PC-3 (cell line): ENCODE measurements at regions of chr6 and their contacts with region 1.

Region 1: GRCh38 chr6:37169496-37170272 is at the start of gene PIM1:
- DNase-seq: peak; percentile 95
- ATAC-seq: peak; percentile 69
- H3K4me3 ChIP-seq: peak within 1 kb of the TSS; percentile 80
- H3K27ac ChIP-seq: peak within 1 kb of the TSS; percentile 78
- H3K4me1 ChIP-seq: peaks cover 13% of the 10 kb centered on the region
- H3K27me3 ChIP-seq: no peaks in the 10 kb centered on the region
- CTCF ChIP-seq: no peak
- total RNA-seq, gene PIM1: 74.1 and 93.3 TPM in 2 replicates

Region 2: GRCh38 chr6:36289281-36289878 is 880.3 kb before region 1 on chr6:
- CTCF ChIA-PET with region 1: no interaction called
- POLR2A ChIA-PET with region 1: interaction called, 23 read pairs
- intact Hi-C with region 1: no loop called
- DNase-seq: no peak
- ATAC-seq: no peak
- H3K4me3 ChIP-seq: no peak overlapping the region
- H3K27ac ChIP-seq: no peak overlapping the region
- H3K4me1 ChIP-seq: no peaks in the 10 kb centered on the region; the same call in 1 of the 2 replicates
- H3K27me3 ChIP-seq: no peaks in the 10 kb centered on the region
- CTCF ChIP-seq: no peak

Region 3: DNA sequence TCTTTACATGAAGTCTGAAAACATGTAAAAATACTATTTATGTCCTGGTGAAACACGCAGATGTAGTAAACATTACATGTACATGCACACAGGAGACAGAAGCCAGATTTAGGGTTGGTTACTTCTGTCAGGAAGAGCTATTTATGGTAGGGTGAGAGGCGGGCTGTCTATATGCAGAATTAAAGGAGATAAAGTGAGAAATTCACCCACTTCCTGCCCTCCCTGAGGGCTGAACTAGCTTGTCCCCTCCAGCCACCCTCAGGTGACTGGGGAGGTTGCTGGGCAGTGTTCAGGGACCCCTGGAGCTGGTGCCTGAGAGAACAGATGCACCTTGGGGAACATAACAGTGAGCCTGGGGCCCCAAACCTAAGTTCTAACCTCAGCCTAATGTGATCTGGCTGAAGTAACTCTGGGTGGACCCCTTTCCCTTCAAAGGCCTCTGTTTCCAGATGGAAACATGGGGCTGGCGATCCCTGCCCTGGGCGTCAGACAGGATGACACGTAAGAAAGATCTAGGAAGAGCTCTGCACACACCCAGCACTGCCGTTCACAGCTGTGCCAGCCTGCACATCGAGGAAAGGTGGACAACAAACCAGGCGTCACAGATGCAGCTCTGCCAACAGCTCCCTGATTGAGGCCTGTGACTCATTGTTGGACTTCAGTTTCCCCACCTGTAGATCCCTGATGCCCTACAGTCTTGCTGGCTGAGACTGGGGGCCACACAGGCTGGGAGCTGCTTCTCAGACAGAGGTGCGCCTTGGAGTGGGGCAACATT is 213.8 kb before region 1 on chr6:
- CTCF ChIA-PET with region 1: no interaction called
- POLR2A ChIA-PET with region 1: interaction called, 33 read pairs
- intact Hi-C with region 1: no loop called
- DNase-seq: peak; percentile 81
- ATAC-seq: peak; percentile 81
- H3K4me3 ChIP-seq: no peak overlapping the region
- H3K27ac ChIP-seq: peak overlapping the region; percentile 40
- H3K4me1 ChIP-seq: peaks cover 25% of the 10 kb centered on the region
- H3K27me3 ChIP-seq: no peaks in the 10 kb centered on the region
- CTCF ChIP-seq: no peak

Region 4: GRCh38 chr6:37029249-37029971 is 140.3 kb before region 1 on chr6:
- CTCF ChIA-PET with region 1: interaction called, 3 read pairs
- POLR2A ChIA-PET with region 1: interaction called, 4 read pairs
- intact Hi-C with region 1: loop called (anchors 1 kb)
- DNase-seq: peak; percentile 91
- ATAC-seq: peak; percentile 93
- H3K4me3 ChIP-seq: no peak overlapping the region
- H3K27ac ChIP-seq: peak overlapping the region; percentile 56
- H3K4me1 ChIP-seq: peaks cover 23% of the 10 kb centered on the region
- H3K27me3 ChIP-seq: no peaks in the 10 kb centered on the region
- CTCF ChIP-seq: peak; percentile 79

Region 5: GRCh38 chr6:37059344-37060206 is 110.1 kb before region 1 on chr6:
- CTCF ChIA-PET with region 1: no interaction called
- POLR2A ChIA-PET with region 1: interaction called, 3 read pairs
- intact Hi-C with region 1: loop called (anchors 1 kb)
- DNase-seq: peak; percentile 97
- ATAC-seq: peak; percentile 71
- H3K4me3 ChIP-seq: peak overlapping the region; percentile 58; the same call in 1 of the 2 replicates
- H3K27ac ChIP-seq: peak overlapping the region; percentile 91
- H3K4me1 ChIP-seq: peaks cover 54% of the 10 kb centered on the region
- H3K27me3 ChIP-seq: no peaks in the 10 kb centered on the region
- CTCF ChIP-seq: peak; percentile 83

Region 6: DNA sequence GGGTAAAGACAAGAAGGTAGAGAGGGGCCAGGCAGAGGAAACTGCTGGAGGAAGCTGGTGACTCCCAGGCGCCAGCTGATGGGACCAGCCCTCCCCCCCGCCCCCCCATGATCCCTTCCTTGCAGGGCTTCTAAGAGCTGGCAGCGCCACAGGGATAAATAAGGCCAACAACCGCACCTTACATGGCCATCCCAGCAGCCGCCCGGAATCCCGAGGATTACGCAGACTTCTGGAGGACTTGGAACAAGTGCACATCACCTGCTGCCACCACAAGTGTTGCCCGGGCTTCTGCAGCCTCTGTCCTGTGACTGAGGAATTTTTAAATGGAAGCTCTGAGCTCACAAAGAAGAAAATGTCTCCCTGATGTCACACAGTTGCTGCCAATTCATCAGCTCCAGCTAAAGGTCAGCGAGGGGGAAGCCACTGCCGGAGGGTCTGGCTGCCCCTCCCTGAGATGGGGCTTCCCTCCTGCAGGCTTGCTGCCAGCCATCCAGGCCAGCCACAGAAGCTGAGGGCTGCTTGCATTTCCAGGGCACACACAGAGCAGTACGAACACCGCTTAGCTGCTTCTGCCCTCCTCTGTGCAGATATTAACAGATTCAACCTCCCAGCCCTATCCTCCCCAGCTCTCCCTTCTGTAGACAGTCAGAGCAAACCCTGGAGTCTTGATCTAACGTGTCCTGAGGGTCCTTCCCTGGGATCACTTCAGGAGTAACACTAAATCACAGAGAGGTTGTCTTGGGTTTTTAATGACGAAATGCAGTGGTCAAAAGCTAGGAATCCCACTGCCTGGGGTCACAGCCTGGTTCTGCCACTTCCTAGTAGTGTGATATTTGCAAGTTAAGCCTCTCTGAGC is 38.4 kb before region 1 on chr6:
- CTCF ChIA-PET with region 1: interaction called, 3 read pairs
- POLR2A ChIA-PET with region 1: no interaction called
- intact Hi-C with region 1: loop called (anchors 1 kb)
- DNase-seq: no peak
- ATAC-seq: no peak
- H3K4me3 ChIP-seq: no peak overlapping the region
- H3K27ac ChIP-seq: peak overlapping the region; percentile 53
- H3K4me1 ChIP-seq: peaks cover 68% of the 10 kb centered on the region
- H3K27me3 ChIP-seq: no peaks in the 10 kb centered on the region
- CTCF ChIP-seq: no peak

Region 7: GRCh38 chr6:37190159-37190535 is 20.5 kb after region 1 on chr6:
- CTCF ChIA-PET with region 1: no interaction called
- POLR2A ChIA-PET with region 1: no interaction called
- intact Hi-C with region 1: no loop called
- DNase-seq: no peak
- ATAC-seq: no peak
- H3K4me3 ChIP-seq: no peak overlapping the region
- H3K27ac ChIP-seq: no peak overlapping the region
- H3K4me1 ChIP-seq: no peaks in the 10 kb centered on the region
- H3K27me3 ChIP-seq: no peaks in the 10 kb centered on the region
- CTCF ChIP-seq: no peak

Region 8: DNA sequence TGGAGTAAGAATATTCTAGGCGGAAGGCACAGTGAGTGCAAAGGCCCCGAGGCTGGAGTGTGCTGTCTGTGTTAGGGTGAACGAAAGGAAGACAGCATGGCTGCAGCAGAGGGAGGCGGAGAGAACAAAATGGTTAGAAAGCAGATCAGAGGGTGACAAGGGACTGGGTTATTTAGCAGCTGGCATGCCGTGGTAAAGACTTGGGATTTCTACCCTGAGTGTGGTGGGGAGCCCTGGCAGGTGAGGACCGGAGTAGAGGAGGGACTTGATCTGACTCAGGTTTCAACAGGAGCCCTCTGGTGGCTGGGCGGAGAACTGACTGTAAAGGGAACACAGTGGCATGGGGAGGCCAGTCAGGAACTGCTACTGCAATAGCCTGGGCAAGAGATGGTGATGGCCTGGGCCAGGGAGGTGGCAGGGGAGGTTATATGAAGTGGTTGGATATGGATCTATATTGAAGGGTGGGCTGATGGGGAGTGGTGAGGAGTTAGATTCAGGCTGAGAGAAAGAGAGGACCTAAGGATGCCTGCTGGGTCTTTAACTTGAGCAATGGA is 38.3 kb after region 1 on chr6:
- CTCF ChIA-PET with region 1: no interaction called
- POLR2A ChIA-PET with region 1: no interaction called
- intact Hi-C with region 1: loop called (anchors 2 kb)
- DNase-seq: peak; percentile 90
- ATAC-seq: peak; percentile 80
- H3K4me3 ChIP-seq: no peak overlapping the region
- H3K27ac ChIP-seq: no peak overlapping the region
- H3K4me1 ChIP-seq: peaks cover 7% of the 10 kb centered on the region; the same call in 1 of the 2 replicates
- H3K27me3 ChIP-seq: no peaks in the 10 kb centered on the region
- CTCF ChIP-seq: peak; percentile 90